ENCODE measurements at regions of chr19 and their contacts with region 1.

Region 1: GRCh38 chr19:29694669-29695627 is 20.1 kb downstream of the C19orf12 start:
- DNase-seq: peak; percentile 67 to 88 (median 82)
- ATAC-seq: peak; percentile 99
- H3K4me3 Mint-ChIP-seq: peak overlapping the region in 1 of 10 donors; percentile 24
- H3K27ac Mint-ChIP-seq: peak overlapping the region in 9 of 10 donors; percentile 4 to 92 (median 83)
- H3K4me1 Mint-ChIP-seq: peaks cover 19 to 40% (median 29%) of the 10 kb centered on the region in 4 donors
- H3K27me3 Mint-ChIP-seq: no peaks in the 10 kb centered on the region

Region 2: GRCh38 chr19:29671393-29672160 is 23.4 kb before region 1 on chr19:
- POLR2A ChIA-PET with region 1: interaction called, 26 read pairs
- DNase-seq: peak; percentile 46 to 91 (median 72)
- ATAC-seq: peak; percentile 47 to 54
- H3K4me3 Mint-ChIP-seq: peak overlapping the region; percentile 63 to 94 (median 84)
- H3K27ac Mint-ChIP-seq: peak overlapping the region; percentile 90 to 99 (median 98)
- H3K4me1 Mint-ChIP-seq: peaks cover 37 to 94% (median 88%) of the 10 kb centered on the region in 4 donors
- H3K27me3 Mint-ChIP-seq: no peaks in the 10 kb centered on the region

Region 3: DNA sequence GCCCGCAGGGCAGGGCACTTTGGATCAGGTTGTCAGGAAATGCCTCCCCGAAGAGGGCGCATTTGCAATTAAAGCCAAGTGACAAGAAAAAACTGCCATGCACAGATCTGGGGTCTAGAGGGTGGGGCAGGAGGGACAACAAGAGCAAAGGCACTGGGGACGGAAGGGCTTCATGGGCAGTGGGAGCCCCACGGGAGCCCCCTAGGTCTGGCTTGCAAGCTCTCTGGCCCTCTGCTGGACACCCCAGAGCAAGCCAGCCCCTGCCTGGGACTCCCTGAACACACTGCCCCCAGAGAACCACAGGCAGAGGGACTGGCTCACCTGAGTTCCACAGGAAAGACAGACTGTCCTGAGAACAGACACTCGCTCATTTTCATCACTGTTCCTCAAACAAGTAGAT is 50.3 kb after region 1 on chr19:
- POLR2A ChIA-PET with region 1: no interaction called
- DNase-seq: no peak
- ATAC-seq: no peak
- H3K4me3 Mint-ChIP-seq: no peak overlapping the region
- H3K27ac Mint-ChIP-seq: no peak overlapping the region
- H3K4me1 Mint-ChIP-seq: no peaks in the 10 kb centered on the region
- H3K27me3 Mint-ChIP-seq: peaks cover 0 to 6% (median 3%) of the 10 kb centered on the region in 5 donors

Region 4: DNA sequence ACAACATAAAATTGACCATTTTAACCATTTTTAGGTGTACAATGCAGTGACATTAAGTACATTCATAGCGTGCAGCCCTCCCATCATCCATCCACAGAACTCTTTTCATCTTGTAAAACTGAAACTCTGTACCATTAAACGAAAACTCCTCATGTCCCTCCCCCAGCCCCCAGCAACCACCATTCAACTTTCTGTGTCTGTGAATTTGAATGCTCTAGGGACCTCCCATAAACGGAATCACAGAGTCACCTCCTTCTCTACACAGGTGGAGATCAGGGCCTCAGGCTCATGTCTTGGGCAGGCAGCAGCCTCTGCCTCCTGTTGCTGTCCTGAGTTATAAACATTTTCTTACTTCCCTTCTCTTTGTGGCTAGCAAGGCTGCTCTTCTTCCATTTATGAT is 109.5 kb after region 1 on chr19:
- POLR2A ChIA-PET with region 1: no interaction called
- DNase-seq: no peak
- ATAC-seq: no peak
- H3K4me3 Mint-ChIP-seq: no peak overlapping the region
- H3K27ac Mint-ChIP-seq: peak overlapping the region in 2 of 10 donors; percentile 19 to 25
- H3K4me1 Mint-ChIP-seq: peaks cover 0 to 7% (median 0%) of the 10 kb centered on the region in 4 donors
- H3K27me3 Mint-ChIP-seq: no peaks in the 10 kb centered on the region

Region 5: DNA sequence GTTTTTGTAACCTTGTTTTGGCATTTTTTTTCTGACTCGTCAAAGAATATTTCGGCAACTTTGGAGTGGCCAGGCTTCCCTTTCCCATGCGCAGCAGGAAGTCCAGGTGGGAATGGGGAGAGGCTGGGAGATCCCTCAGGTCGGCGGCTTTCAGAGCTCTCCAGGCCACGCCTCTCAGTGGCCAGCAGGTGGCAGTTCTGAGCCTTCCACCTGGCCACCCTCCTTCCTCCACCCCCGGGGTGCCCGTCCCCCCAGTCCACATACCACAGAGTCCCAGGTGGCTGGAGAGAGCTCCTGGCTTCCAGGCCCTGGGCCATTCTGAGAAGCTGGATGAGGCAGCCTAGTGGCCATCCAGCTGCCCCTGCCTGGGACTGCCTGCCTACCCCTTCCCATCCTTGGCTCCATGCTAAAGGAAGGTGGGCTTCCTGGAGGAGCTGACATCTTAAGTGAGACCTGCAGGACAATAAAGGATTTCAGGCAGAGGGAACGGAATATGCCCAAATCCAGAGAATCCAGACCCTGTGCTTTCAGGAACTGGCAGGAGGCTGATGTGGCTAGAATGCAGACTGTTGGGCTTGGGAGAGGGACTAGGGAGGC is 163.2 kb after region 1 on chr19:
- POLR2A ChIA-PET with region 1: no interaction called
- DNase-seq: peak in 7 of 10 donors; percentile 19 to 49 (median 43)
- ATAC-seq: peak; percentile 79 to 92
- H3K4me3 Mint-ChIP-seq: no peak overlapping the region
- H3K27ac Mint-ChIP-seq: no peak overlapping the region
- H3K4me1 Mint-ChIP-seq: peaks cover 0 to 5% (median under 1%) of the 10 kb centered on the region in 4 donors
- H3K27me3 Mint-ChIP-seq: peaks cover 0 to 19% (median 9%) of the 10 kb centered on the region in 5 donors